Activated T-helper 2 cell treated with anti-CD3 and anti-CD28 coated beads, Interferon-gamma antibody, Interleukin-2, Interleukin-4, amounts not matched to agents 10 μg/mL and 5 μg/mL and 100 μg/mL, durations not matched to agents 14 hours and 24 hours and 36 hours (primary cell): ENCODE measurements at regions of chr2 and their contacts with region 1.

Region 1: GRCh38 chr2:181790716-181791649 is 100.5 kb upstream of the ITPRID2 start:
- DNase-seq: peak; percentile 21
- H3K4me3 Mint-ChIP-seq: peak overlapping the region; percentile 22
- H3K27ac Mint-ChIP-seq: peak overlapping the region; percentile 71
- H3K4me1 Mint-ChIP-seq: peaks cover 34% of the 10 kb centered on the region
- H3K27me3 Mint-ChIP-seq: no peaks in the 10 kb centered on the region

Region 2: DNA sequence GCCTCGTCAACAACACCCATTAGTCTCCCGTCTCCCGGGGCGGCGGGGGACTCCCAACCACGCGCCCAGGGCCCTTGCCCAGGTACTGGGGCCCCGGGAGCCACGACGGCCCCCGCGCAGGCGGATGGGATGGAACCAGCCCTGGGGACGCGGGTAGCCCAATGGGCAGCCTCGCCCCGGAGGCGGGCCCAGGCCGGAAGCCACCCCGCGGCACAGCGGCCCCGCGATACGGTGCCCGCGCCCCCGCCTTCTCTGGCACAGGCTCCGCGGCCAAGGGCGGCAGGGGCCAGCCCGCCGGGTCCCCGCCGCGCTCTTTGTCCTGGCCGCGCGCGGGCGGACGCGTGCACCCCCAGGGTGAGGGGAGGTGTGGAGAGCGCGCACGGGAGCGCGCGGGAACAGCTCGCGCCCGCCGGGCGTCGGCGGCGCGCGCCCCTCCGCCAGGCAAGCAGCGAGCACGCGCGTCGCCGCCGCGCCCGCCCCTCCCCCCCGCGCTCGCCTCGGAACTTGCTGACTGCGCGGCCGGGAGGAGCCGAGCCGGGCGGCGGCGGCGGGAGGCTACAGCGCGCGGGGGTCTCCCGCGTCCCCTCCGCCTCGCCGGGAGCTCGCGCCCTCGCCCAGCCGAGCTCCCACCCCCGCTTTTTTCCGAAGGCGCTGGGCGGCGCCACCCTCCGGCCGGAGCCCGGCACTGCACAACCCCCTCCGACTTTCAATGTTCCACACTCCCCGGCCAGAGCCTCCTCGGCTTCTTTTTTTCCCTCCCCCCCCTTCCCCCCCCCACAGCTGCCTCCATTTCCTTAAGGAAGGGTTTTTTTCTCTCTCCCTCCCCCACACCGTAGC is 810.7 kb before region 1 on chr2 and contains the start of gene UBE2E3:
- intact Hi-C with region 1: loop called (anchors 5 kb)
- DNase-seq: peak; percentile 77
- H3K4me3 Mint-ChIP-seq: peak within 1 kb of the TSS; percentile 99
- H3K27ac Mint-ChIP-seq: peak within 1 kb of the TSS; percentile 95
- H3K4me1 Mint-ChIP-seq: peaks cover 36% of the 10 kb centered on the region
- H3K27me3 Mint-ChIP-seq: peaks cover 38% of the 10 kb centered on the region
- total RNA-seq, gene UBE2E3: 49.5 and 53.2 TPM in 2 replicates

Region 3: GRCh38 chr2:181305301-181306123 is 485.5 kb before region 1 on chr2:
- intact Hi-C with region 1: loop called (anchors 5 kb)
- DNase-seq: peak; percentile 70
- H3K4me3 Mint-ChIP-seq: peak overlapping the region; percentile 70
- H3K27ac Mint-ChIP-seq: peak overlapping the region; percentile 93
- H3K4me1 Mint-ChIP-seq: peaks cover 74% of the 10 kb centered on the region
- H3K27me3 Mint-ChIP-seq: no peaks in the 10 kb centered on the region

Region 4: DNA sequence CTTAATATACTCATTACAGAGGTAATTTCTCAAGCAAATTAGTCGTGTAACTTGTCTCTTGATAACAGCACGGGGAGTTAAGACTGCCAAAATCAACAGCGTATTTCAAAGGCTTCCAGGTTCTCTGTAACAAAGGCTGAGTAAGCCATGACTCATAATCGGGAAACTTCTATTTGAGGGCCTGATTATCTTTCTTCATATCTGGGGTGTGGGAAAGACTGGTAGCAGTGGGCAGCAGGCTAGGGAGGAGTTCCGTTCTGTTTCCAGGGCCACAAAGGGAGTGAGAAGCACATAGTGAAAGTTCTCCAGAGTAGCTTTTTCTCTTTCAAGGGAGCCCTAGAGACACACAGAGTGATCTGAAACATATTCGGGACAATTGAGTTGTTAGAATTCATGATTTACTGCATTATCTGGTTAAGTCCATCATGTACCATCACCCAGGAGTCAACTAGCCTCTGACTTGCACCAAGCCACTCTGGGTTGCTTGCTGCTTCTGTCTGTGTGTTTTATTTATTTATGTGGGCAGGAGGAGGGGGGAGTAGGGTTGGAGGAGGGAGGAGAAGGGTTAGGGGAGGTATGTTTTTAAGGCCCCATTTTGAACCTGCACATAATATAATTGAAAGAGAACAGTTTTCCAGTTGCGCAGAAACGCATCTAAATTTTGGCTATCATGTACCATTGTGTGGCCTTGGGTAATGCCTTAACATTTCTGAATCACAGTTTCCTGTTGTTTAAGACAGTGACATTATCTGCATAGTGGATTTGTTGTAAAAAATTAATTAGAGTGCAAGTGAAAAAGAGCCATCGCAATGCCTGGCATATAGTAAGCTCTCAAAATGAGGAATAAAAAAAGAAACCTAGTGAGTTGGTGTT is 20.1 kb after region 1 on chr2:
- intact Hi-C with region 1: loop called (anchors 1 kb)
- DNase-seq: no peak
- H3K4me3 Mint-ChIP-seq: no peak overlapping the region
- H3K27ac Mint-ChIP-seq: peak overlapping the region; percentile 4
- H3K4me1 Mint-ChIP-seq: peaks cover 27% of the 10 kb centered on the region
- H3K27me3 Mint-ChIP-seq: peaks cover 11% of the 10 kb centered on the region

Region 5: DNA sequence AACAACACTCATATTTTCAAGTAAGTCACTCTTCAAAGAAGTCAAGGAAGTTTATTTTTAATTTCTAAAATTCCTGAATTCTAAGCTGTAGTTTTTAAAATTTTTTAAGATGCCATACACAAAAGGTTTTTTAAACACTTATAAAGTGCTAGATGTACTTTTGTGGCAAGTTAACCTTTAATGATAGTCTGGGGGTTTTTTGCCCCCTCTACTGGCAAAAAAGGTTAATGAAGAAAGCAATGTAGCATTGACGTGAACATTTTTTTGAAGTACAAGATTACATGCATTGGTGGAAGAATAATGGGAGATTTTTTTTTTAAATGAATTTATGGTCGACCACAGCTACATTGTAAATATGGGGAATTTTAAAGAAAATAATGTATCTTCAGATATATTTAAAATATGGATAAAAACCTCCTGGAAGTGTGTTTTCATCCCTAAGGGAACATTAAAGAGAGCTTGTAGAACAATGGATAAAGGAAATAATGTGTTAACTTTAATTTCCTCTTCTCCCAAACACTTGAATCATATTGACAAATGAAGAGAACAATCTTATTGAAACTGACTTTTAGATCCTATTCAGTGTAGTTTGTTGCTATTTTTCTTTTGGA is 113.1 kb after region 1 on chr2:
- intact Hi-C with region 1: loop called (anchors 5 kb)
- DNase-seq: no peak
- H3K4me3 Mint-ChIP-seq: no peak overlapping the region
- H3K27ac Mint-ChIP-seq: no peak overlapping the region
- H3K4me1 Mint-ChIP-seq: peaks cover 25% of the 10 kb centered on the region
- H3K27me3 Mint-ChIP-seq: no peaks in the 10 kb centered on the region

Region 6: DNA sequence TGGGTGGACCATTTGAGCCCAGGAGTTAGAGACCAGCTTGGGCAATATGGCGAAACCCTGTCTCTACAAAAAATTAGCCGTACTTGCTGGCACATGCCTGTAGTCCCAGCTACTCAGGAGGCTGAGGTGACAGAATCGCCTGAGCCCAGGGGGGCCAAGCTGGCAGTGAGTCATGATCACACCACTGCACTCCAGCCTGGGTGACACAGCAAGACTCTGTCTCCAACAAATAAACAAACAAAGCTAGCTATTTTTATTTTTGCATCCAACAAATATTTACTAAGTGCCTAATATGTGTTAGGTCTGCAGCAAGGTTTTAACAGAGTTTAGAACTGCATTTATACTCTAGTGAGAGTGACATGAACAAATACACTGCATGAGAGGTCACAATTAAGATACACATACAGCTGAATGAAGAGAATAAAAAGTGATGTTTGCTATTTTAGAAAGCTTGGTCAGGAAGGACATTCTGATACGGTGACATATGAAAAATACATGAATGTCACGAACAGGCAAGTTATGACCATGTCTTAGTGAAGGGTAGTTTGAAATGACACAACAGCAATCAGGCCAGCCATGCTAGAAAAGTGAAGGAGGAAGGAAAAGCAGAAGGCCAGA is 1158.7 kb after region 1 on chr2:
- intact Hi-C with region 1: loop called (anchors 10 kb)
- DNase-seq: no peak
- H3K4me3 Mint-ChIP-seq: no peak overlapping the region
- H3K27ac Mint-ChIP-seq: no peak overlapping the region
- H3K4me1 Mint-ChIP-seq: peaks cover 17% of the 10 kb centered on the region
- H3K27me3 Mint-ChIP-seq: no peaks in the 10 kb centered on the region